Activated CD4-positive, alpha-beta T cell treated with anti-CD3 and anti-CD28 coated beads for 36 hours (primary cell): ENCODE measurements at regions of chr4 and their contacts with region 1.

Region 1: DNA sequence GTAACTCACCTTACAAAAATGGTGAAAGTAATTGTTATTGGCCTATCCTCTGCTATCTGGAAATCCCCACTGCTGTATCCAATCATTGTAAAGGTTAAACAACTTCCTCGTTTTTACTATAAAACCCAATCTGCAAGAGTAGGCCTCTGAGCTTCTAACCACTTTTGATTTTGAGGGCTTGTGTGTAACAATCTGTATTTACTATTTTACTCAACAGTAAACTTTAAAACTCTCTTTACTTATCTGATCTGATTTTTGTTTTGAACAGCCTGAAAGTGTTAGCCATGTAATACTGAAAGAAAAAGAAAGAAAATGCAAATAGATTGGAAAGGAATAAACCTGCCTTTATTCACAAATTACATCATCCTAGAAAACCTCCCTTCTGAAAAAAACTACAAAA is 63.1 kb downstream of the SLC10A7 start:
- DNase-seq: no peak
- ATAC-seq: peak; percentile 96
- H3K4me3 Mint-ChIP-seq: peak overlapping the region; percentile 62
- H3K27ac Mint-ChIP-seq: peak overlapping the region; percentile 93
- H3K4me1 Mint-ChIP-seq: peaks cover 24% of the 10 kb centered on the region
- H3K27me3 Mint-ChIP-seq: no peaks in the 10 kb centered on the region

Region 2: GRCh38 chr4:145732895-145733880 is 725.4 kb before region 1 on chr4:
- CTCF ChIA-PET with region 1: no interaction called
- POLR2A ChIA-PET with region 1: no interaction called
- intact Hi-C with region 1: loop called in 1 of 2 experiments (anchors 5 kb)
- DNase-seq: peak; percentile 92
- ATAC-seq: peak; percentile 92
- H3K4me3 Mint-ChIP-seq: peak overlapping the region; percentile 65
- H3K27ac Mint-ChIP-seq: peak overlapping the region; percentile 56
- H3K4me1 Mint-ChIP-seq: peaks cover 23% of the 10 kb centered on the region
- H3K27me3 Mint-ChIP-seq: no peaks in the 10 kb centered on the region

Region 3: GRCh38 chr4:146522098-146522868 is 63.7 kb after region 1 on chr4:
- CTCF ChIA-PET with region 1: no interaction called
- POLR2A ChIA-PET with region 1: interaction called, 3 read pairs
- intact Hi-C with region 1: loop called (anchors 1 kb)
- DNase-seq: peak; percentile 91
- ATAC-seq: peak; percentile 77
- H3K4me3 Mint-ChIP-seq: no peak overlapping the region
- H3K27ac Mint-ChIP-seq: no peak overlapping the region
- H3K4me1 Mint-ChIP-seq: peaks cover 27% of the 10 kb centered on the region
- H3K27me3 Mint-ChIP-seq: no peaks in the 10 kb centered on the region

Region 4: DNA sequence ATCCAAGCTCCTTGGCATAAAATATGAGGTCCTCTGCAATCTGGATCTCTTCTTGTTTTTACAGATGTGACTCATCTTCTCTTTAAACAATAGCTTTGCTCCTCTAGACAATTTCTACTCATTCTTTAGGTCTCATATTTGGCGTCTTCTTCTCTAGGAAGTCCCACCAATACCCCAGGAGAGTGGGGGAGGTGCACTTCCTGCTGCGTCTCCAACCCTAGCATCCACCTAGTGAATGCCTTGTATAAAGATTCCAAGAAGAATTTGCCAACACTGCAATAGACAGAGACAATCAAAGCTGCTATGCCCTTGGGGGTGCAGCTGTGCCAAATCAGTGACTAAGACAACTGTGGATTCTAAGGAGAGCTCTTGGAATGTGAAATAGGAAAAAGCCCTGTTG is 108.8 kb after region 1 on chr4:
- CTCF ChIA-PET with region 1: no interaction called
- POLR2A ChIA-PET with region 1: no interaction called
- intact Hi-C with region 1: no loop called
- DNase-seq: no peak
- ATAC-seq: no peak
- H3K4me3 Mint-ChIP-seq: no peak overlapping the region
- H3K27ac Mint-ChIP-seq: no peak overlapping the region
- H3K4me1 Mint-ChIP-seq: no peaks in the 10 kb centered on the region
- H3K27me3 Mint-ChIP-seq: peaks cover 21% of the 10 kb centered on the region